ENCODE measurements at regions of chr5 and their contacts with region 1.

Region 1: DNA sequence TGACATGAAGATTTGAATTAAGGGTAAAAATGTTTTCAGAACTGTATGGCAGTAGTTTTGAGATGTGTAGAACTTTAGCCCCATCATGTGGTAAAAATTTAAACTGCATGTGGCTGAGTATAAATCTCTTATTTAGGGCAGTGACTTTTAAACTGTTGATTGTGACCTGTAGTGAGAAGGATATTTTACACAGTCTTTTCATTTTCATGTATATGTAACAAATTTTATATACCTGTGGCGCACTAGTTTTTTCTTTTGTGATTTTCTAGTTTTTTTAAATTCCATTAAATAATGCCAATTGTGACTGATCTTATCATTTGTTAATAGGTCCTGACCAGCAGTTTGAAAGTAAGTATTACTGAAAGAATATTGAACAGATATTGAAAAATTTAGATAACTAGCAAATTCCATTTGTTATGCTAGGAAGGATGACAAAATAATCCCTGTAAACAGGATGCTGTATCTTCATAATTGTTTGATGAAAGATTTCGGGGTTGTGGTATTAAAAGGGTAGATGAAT is 47.2 kb downstream of the GPBP1 start:
- DNase-seq: peak in 7 of 35 experiments; percentile 10 to 87 (median 16)
- ATAC-seq: peak; percentile 64 to 69 (median 68)
- H3K4me3 ChIP-seq: no peak overlapping the region
- H3K4me3 Mint-ChIP-seq: peak overlapping the region in 1 of 3 donors; percentile 33
- H3K27ac ChIP-seq: peak overlapping the region; percentile 5
- H3K27ac Mint-ChIP-seq: peak overlapping the region; percentile 71 to 75
- H3K4me1 ChIP-seq: peaks cover 0 to 11% of the 10 kb centered on the region in 2 experiments
- H3K4me1 Mint-ChIP-seq: peaks cover 41 to 54% (median 53%) of the 10 kb centered on the region in 3 donors
- H3K27me3 ChIP-seq: no peaks in the 10 kb centered on the region
- H3K27me3 Mint-ChIP-seq: no peaks in the 10 kb centered on the region

Region 2: GRCh38 chr5:57111993-57112392 is 109.1 kb before region 1 on chr5:
- CTCF ChIA-PET with region 1: interaction called in 1 of 2 experiments, 3 read pairs
- POLR2A ChIA-PET with region 1: interaction called in 1 of 2 experiments, 10 read pairs
- DNase-seq: no peak
- ATAC-seq: no peak
- H3K4me3 ChIP-seq: no peak overlapping the region
- H3K4me3 Mint-ChIP-seq: no peak overlapping the region
- H3K27ac ChIP-seq: no peak overlapping the region
- H3K27ac Mint-ChIP-seq: no peak overlapping the region
- H3K4me1 ChIP-seq: peaks cover 0 to 7% of the 10 kb centered on the region in 2 experiments
- H3K4me1 Mint-ChIP-seq: peaks cover 0 to 9% (median 6%) of the 10 kb centered on the region in 3 donors
- H3K27me3 ChIP-seq: peaks cover 0 to 2% of the 10 kb centered on the region in 2 experiments
- H3K27me3 Mint-ChIP-seq: no peaks in the 10 kb centered on the region

Region 3: GRCh38 chr5:57163553-57164006 is 57.5 kb before region 1 on chr5:
- CTCF ChIA-PET with region 1: no interaction called
- POLR2A ChIA-PET with region 1: no interaction called
- DNase-seq: no peak
- ATAC-seq: no peak
- H3K4me3 ChIP-seq: no peak overlapping the region
- H3K4me3 Mint-ChIP-seq: no peak overlapping the region
- H3K27ac ChIP-seq: no peak overlapping the region
- H3K27ac Mint-ChIP-seq: no peak overlapping the region
- H3K4me1 ChIP-seq: peaks cover 0 to 2% of the 10 kb centered on the region in 2 experiments
- H3K4me1 Mint-ChIP-seq: peaks cover 0 to 5% (median 0%) of the 10 kb centered on the region in 3 donors
- H3K27me3 ChIP-seq: peaks cover 0 to 2% of the 10 kb centered on the region in 2 experiments
- H3K27me3 Mint-ChIP-seq: no peaks in the 10 kb centered on the region

Region 4: DNA sequence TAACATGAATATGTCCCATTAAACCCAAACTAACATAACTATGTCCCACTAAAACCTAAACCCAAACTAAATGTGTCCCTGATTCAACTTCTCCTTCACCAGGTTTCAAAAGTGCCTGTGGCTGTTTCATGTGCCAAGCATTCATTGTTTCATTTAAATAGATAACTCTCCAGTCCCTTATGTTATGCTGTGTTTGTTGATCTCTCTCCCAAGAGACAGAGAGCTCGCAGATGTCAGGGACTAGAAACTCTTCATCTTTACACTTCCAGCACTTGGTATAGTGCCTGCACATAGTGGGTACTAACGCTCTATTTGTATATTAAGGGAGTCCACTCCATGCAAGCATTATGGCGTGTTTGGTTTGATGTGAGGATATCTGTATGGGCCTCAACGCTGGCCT is 70.8 kb after region 1 on chr5:
- CTCF ChIA-PET with region 1: no interaction called
- POLR2A ChIA-PET with region 1: no interaction called
- DNase-seq: no peak
- ATAC-seq: no peak
- H3K4me3 ChIP-seq: no peak overlapping the region
- H3K4me3 Mint-ChIP-seq: no peak overlapping the region
- H3K27ac ChIP-seq: no peak overlapping the region
- H3K27ac Mint-ChIP-seq: no peak overlapping the region
- H3K4me1 ChIP-seq: no peaks in the 10 kb centered on the region
- H3K4me1 Mint-ChIP-seq: no peaks in the 10 kb centered on the region
- H3K27me3 ChIP-seq: peaks cover 0 to 2% of the 10 kb centered on the region in 2 experiments
- H3K27me3 Mint-ChIP-seq: peaks cover 0 to 4% of the 10 kb centered on the region in 2 donors

Measured in T-cell (primary cell).